ENCODE measurements at regions of chr6 and their contacts with region 1.

Region 1: DNA sequence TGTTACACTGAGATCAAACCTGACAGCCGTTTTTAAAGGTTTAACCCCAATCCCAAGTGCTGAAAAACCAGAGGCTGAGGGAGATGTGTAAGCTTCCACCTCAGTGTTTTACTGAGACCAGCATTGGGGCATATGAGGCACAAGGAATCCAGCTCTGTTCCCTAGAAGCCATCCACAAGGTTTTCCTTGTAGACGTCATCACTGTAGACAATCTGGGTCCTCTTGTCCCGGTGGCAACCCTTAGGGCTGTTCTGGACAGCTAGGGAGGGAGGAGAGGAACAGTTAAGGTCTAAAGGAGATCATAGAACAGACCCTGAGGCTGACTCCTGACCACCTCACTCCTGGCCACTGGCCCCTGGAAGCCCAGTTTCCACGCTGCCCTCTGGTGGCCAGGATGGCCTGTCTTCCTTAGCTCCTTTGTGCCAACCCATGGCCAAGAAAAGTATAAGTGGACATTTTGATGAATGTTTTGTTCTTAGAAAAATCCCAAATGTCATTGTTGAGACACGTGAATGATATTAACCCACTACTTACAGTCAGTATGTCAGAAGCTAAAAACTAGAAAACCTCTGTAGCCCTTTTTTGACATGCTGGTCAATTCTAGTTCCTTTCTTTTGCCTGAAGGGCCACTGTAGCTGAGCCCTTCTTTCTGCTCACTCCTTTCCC is 6.4 kb downstream of the CFB start:
- DNase-seq: no peak
- ATAC-seq: peak; percentile 80
- H3K4me3 ChIP-seq: no peak overlapping the region
- H3K27ac ChIP-seq: 0 out of 2 replicates have a peak overlapping the region, but pooled peaks have one; percentile 19
- H3K4me1 ChIP-seq: peaks cover 0 to 16% of the 10 kb centered on the region in 2 experiments; a peak in 2 of 4 replicates
- H3K27me3 ChIP-seq: no peaks in the 10 kb centered on the region
- CTCF ChIP-seq: peak; percentile 89 to 95 (median 90)
- POLR2A ChIP-seq: no peak
- RAD21 ChIP-seq: peak; percentile 82

Region 2: DNA sequence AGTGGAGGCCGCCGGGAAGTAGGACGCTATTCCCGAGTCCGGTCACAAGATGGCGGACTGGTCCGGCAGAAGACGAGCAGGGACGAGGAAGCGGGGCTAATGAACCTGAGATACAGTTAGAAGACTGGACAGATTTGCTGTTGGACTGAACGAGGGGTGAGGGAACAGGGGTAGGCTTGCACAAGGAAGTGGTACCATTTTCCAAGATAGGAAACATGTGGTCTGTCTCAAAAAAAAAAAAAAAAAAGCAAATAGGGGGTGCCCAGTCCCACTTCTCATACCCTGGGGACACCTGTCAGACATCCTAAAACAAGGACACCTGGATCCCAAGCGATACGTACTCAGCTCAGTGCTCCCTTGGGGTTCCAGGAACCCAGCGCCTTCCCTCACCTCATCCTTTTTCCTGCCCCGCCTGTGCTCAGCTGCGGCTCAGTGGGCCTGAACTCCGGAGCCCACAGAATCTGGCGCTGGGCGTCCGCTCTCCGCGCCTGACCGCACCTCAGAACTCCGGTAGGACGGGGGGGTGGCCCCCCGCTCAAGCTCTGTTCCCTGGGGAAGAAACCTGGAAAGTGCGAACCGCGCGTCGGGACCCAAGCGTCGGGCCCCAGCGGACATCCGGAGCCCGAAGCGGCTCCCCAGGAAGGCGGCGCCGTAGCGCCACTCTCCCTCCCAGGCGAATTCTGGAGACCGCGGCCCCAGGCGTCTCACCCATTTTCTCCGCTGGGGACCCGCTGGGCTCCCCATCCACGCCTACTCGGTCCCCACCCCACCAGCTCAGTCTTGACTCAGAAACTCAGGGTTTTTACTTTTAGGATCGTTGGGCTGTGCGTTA is 271.2 kb before region 1 on chr6 and contains the start of gene LY6G5C:
- CTCF ChIA-PET with region 1: interaction called, 7 read pairs
- POLR2A ChIA-PET with region 1: no interaction called
- RAD21 ChIA-PET with region 1: no interaction called
- intact Hi-C with region 1: loop called (anchors 1 kb)
- DNase-seq: peak; percentile 73
- ATAC-seq: peak; percentile 85
- H3K4me3 ChIP-seq: peak within 1 kb of the TSS; percentile 53 to 61
- H3K27ac ChIP-seq: peak within 1 kb of the TSS; percentile 70
- H3K4me1 ChIP-seq: peaks cover 4 to 19% of the 10 kb centered on the region in 2 experiments; a peak in 3 of 4 replicates
- H3K27me3 ChIP-seq: no peaks in the 10 kb centered on the region
- CTCF ChIP-seq: peak; percentile 43 to 90 (median 65)
- POLR2A ChIP-seq: no peak
- RAD21 ChIP-seq: peak; percentile 99
- total RNA-seq, gene LY6G5C: 1.7 TPM

Region 3: DNA sequence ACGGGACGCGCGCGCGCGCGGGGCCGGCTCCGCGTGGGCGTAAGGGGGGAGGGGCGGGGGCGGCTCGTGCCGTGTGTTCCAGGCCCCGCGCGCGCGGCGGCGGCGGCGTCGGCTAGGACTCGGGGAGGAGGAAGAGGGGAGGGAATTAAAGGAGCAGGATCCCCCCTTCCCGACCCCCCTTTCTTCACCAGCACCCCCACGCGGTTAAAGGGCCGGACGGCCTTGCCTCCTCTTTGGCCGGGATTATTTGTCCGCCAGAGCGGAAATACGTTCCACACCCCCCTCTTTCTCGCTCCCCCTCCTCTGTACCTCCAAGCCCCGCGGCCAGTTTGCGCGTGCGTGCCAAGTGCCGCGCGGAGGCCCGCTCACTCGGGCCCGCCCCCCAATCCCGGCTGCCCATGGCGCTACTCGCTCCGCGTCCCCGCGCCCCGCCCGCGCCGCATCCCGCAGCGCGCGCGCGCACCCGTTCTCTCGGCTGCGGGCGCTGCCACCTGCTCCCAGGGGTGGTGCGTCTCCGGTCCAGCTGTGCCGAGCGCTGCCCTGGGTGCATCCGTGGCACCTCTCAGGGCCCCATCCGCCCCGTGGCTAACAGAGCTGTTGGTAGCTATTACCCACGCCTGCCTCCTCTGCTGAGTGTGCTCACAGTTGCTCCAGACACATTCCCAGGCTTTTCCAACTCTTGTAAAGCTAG is 50.2 kb before region 1 on chr6 and contains the start of gene ZBTB12:
- CTCF ChIA-PET with region 1: interaction called, 9 read pairs
- POLR2A ChIA-PET with region 1: interaction called, 3 read pairs
- RAD21 ChIA-PET with region 1: interaction called in 1 of 2 experiments, 4 read pairs
- intact Hi-C with region 1: loop called (anchors 2 kb)
- DNase-seq: peak; percentile 89
- ATAC-seq: peak; percentile 73
- H3K4me3 ChIP-seq: peak within 1 kb of the TSS; percentile 56 to 63
- H3K27ac ChIP-seq: peak within 1 kb of the TSS; percentile 64
- H3K4me1 ChIP-seq: peaks cover 10 to 31% of the 10 kb centered on the region in 2 experiments; a peak in 3 of 4 replicates
- H3K27me3 ChIP-seq: no peaks in the 10 kb centered on the region
- CTCF ChIP-seq: no peak
- POLR2A ChIP-seq: no peak
- RAD21 ChIP-seq: peak; percentile 64
- total RNA-seq, gene ZBTB12: 10.3 TPM

Region 4: GRCh38 chr6:31922942-31923341 is 29.3 kb before region 1 on chr6:
- CTCF ChIA-PET with region 1: interaction called, 11 read pairs
- POLR2A ChIA-PET with region 1: no interaction called
- RAD21 ChIA-PET with region 1: no interaction called
- intact Hi-C with region 1: no loop called
- DNase-seq: peak; percentile 42
- ATAC-seq: peak; percentile 68; the same call in 1 of the 2 replicates
- H3K4me3 ChIP-seq: no peak overlapping the region
- H3K27ac ChIP-seq: no peak overlapping the region
- H3K4me1 ChIP-seq: no peaks in the 10 kb centered on the region
- H3K27me3 ChIP-seq: no peaks in the 10 kb centered on the region
- CTCF ChIP-seq: peak in 2 of 3 experiments; percentile 39 to 54; a peak in 4 of 6 replicates
- POLR2A ChIP-seq: no peak
- RAD21 ChIP-seq: peak; percentile 77

Region 5: DNA sequence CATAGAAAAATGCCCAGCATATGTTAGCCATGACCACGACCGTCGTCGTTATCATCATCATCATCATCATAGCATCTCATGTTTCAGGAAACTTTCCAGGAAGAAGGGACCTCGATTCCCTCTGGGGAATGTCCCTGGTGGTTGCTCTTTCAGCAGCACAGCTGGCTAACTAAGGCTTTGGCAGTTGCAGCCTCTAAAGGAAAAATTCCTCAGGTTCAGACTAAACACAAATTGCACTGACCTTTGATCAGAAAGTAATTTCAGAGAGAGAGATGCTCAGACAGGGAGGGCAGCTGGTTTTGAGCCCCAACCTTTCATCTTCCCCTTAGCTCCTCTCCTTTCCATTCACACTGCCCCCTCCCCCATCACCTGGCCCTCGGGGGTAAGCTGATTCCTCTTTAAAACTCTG is 12.0 kb before region 1 on chr6:
- CTCF ChIA-PET with region 1: interaction called, 11 read pairs
- POLR2A ChIA-PET with region 1: no interaction called
- RAD21 ChIA-PET with region 1: no interaction called
- intact Hi-C with region 1: no loop called
- DNase-seq: no peak
- ATAC-seq: no peak
- H3K4me3 ChIP-seq: no peak overlapping the region
- H3K27ac ChIP-seq: no peak overlapping the region
- H3K4me1 ChIP-seq: peaks cover 9 to 34% of the 10 kb centered on the region in 2 experiments; a peak in 3 of 4 replicates
- H3K27me3 ChIP-seq: no peaks in the 10 kb centered on the region
- CTCF ChIP-seq: no peak
- POLR2A ChIP-seq: no peak
- RAD21 ChIP-seq: no peak

Region 6: DNA sequence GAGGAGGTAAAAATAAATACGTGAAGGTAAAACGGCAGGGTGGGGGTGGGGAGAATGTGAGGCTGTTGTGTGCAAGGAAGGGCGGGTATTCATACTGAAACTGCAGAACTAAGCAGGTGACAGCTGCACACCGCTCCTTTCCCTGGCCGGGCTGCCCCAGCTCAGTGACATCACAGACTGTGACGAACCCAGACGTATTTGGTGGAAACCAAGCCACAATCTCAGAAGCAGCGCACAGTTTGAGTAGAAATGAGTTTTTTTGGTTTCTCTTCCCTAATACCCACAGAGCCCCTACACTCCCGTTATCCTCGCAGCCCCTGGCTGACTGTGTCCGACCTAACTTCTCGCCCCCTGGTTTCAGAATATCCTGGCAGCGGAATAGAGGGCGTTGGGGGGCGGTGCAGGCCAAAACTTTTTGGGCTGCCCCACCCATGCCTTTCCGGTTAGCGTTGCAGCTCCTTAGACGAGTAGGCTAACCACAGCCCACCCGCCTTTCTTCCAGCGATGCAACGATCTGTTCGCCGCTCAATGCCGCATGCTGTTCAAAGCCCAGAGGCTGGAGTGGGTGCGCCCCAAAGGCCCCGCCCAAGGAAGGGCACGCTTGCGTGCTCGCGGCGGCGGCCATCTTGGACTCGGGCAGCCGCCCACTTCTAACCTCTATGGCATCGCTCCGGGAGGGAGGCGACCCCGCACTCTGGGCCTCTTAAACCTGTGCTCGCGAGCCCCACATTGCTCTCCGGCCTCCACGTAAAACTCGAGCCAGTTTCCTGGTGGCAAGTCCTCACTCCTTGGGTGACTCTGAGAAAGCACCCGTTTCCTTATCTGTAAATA is 1618.7 kb after region 1 on chr6:
- CTCF ChIA-PET with region 1: no interaction called
- POLR2A ChIA-PET with region 1: no interaction called
- RAD21 ChIA-PET with region 1: no interaction called
- intact Hi-C with region 1: no loop called
- DNase-seq: peak; percentile 31
- ATAC-seq: peak; percentile 96
- H3K4me3 ChIP-seq: peak overlapping the region; percentile 39 to 58
- H3K27ac ChIP-seq: peak overlapping the region; percentile 42
- H3K4me1 ChIP-seq: peaks cover 5 to 23% of the 10 kb centered on the region in 2 experiments; a peak in 3 of 4 replicates
- H3K27me3 ChIP-seq: no peaks in the 10 kb centered on the region
- CTCF ChIP-seq: no peak
- POLR2A ChIP-seq: peak; percentile 70
- RAD21 ChIP-seq: no peak